ENCODE measurements at regions of chr14 and their contacts with region 1.

Region 1: DNA sequence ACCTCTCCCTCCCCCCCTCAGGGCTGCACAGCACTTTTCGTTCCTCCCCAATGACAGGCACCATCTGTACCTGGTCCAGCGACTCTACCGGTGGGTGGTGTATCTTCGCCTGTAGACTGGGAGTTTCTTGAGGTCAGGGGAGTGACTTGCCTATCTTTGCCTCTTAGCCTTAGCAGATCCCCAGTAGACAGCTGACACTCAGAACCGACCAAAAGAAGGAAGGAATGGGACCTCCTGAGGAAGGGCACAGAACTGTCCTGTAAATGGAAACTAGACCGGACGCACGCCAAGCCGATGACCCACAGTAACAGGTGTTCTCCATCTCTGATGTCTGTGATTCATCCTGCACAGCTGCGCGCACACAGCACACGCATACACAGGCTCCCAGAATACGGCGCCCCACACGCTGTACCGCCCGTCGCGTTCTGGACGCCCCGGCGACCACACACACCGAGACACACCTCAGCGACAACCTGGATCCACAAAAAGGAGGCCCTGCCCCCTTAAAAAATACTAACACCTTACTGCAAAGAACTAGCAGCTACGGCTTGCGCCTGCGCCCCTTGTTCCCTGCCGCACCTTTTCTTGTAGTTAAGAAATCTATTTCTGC is 673 bp upstream of the TTC9 start:
- DNase-seq: peak; percentile 66
- ATAC-seq: peak; percentile 65
- H3K4me3 Mint-ChIP-seq: peak overlapping the region; percentile 95
- H3K27ac Mint-ChIP-seq: peak overlapping the region; percentile 92
- H3K4me1 Mint-ChIP-seq: peaks cover 32% of the 10 kb centered on the region
- H3K27me3 Mint-ChIP-seq: no peaks in the 10 kb centered on the region

Region 2: DNA sequence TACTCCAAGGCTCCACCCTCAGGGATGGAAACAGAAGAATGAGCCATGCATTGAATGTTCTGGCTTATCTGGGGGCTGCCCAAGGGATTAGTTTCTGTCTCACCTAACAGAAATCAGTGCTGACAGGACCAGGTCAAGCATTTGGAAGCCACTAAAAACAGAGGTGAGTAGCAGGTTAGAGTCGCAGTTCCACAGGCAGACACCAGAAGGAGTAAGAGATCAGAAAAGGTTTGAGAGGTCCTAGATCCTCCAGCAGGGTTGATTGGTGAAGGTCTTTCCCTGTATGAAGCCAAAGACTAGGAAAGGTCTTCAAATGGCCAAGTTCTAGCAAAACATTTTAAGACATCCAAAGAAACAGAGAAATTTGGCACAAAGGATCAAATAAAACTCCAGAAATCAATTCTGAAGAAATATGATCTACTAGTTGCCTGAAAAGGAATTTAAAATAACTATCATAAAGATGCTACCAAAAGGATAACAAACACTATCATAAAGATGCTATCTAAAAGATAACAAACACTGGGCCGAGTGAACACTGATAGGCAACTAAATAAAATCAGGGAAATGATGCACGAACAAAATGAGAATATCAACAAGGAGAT is 18.8 kb before region 1 on chr14:
- POLR2A ChIA-PET with region 1: no interaction called
- DNase-seq: no peak
- ATAC-seq: peak; percentile 74
- H3K4me3 Mint-ChIP-seq: no peak overlapping the region
- H3K27ac Mint-ChIP-seq: no peak overlapping the region
- H3K4me1 Mint-ChIP-seq: peaks cover 2% of the 10 kb centered on the region
- H3K27me3 Mint-ChIP-seq: peaks cover 3% of the 10 kb centered on the region

Region 3: GRCh38 chr14:70655110-70655826 is 14.2 kb after region 1 on chr14:
- POLR2A ChIA-PET with region 1: interaction called, 176 read pairs
- DNase-seq: peak; percentile 61
- ATAC-seq: peak; percentile 85
- H3K4me3 Mint-ChIP-seq: peak overlapping the region; percentile 87
- H3K27ac Mint-ChIP-seq: peak overlapping the region; percentile 98
- H3K4me1 Mint-ChIP-seq: peaks cover 71% of the 10 kb centered on the region
- H3K27me3 Mint-ChIP-seq: no peaks in the 10 kb centered on the region

Region 4: DNA sequence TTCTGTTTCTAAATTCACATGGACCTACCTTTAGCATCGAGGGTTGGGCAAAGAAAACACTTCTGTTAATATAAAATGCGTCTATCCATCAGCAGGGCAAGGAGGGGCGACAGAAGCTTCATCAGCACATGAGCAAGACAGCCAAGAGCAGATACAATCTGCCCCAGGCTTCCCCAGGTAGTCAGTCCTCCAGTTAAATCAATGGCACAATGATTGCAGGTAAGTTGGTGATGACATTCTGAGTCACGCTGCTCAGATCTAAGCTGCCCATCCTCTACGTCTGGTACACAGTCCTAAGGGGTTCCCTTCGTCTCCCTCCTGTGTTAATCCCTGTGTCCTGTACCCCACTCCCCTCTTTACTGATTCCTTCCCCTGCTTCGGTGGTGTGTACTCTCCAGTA is 129.4 kb after region 1 on chr14:
- POLR2A ChIA-PET with region 1: no interaction called
- DNase-seq: no peak
- ATAC-seq: no peak
- H3K4me3 Mint-ChIP-seq: no peak overlapping the region
- H3K27ac Mint-ChIP-seq: no peak overlapping the region
- H3K4me1 Mint-ChIP-seq: no peaks in the 10 kb centered on the region
- H3K27me3 Mint-ChIP-seq: no peaks in the 10 kb centered on the region

Region 5: DNA sequence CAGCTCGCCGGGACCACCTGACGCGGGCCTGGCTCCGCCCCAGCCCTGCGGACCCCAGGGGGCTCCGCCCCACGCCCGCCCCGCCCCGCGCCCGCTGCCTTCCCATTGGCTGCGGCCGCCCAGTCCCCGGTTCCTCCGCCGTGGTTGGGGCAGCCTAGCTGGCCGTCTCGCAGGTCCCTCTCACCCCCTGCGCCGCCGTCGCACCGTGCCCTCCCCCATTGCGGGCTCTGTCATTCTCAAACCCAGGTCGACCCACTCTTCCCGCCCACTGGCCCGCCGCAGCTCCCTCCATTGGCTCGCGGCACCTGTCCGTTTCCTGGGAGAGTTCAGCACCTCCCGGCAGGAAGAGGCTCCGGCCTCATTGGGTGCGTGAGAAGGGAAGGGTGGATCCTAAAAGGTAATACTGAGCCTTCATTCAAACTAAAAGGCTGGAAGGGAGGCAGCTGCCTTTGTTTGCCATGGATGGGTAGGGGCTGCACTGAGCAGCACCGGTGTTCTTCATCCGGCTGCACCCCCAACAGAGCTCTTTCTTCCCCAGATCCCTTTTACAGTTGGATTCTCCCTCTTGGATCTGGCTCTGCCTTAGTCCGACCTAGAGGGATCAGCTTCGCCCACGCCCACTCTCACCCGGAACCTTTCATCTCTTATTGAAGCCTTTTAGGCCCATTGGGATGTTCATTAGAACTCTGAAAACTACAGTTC is 168.7 kb after region 1 on chr14:
- POLR2A ChIA-PET with region 1: interaction called, 19 read pairs
- DNase-seq: peak; percentile 92
- ATAC-seq: peak; percentile 92
- H3K4me3 Mint-ChIP-seq: no peak overlapping the region
- H3K27ac Mint-ChIP-seq: peak overlapping the region; percentile 82
- H3K4me1 Mint-ChIP-seq: peaks cover 8% of the 10 kb centered on the region
- H3K27me3 Mint-ChIP-seq: no peaks in the 10 kb centered on the region

Measured in activated naive CD8-positive, alpha-beta T cell treated with anti-CD3 and anti-CD28 coated beads, Interleukin-2, amount 10 ng/mL, durations not matched to agents 7 days and 5 days (primary cell).